MCF 10A (cell line): ENCODE measurements at regions of chr6 and their contacts with region 1.

Region 1: GRCh38 chr6:168370310-168370991 is 50.9 kb upstream of the DACT2 start:
- DNase-seq: peak; percentile 59
- H3K4me3 Mint-ChIP-seq: no peak overlapping the region
- H3K27ac Mint-ChIP-seq: no peak overlapping the region
- H3K4me1 Mint-ChIP-seq: peaks cover 6% of the 10 kb centered on the region
- H3K27me3 Mint-ChIP-seq: peaks cover 10% of the 10 kb centered on the region
- CTCF ChIP-seq: peak; percentile 83

Region 2: DNA sequence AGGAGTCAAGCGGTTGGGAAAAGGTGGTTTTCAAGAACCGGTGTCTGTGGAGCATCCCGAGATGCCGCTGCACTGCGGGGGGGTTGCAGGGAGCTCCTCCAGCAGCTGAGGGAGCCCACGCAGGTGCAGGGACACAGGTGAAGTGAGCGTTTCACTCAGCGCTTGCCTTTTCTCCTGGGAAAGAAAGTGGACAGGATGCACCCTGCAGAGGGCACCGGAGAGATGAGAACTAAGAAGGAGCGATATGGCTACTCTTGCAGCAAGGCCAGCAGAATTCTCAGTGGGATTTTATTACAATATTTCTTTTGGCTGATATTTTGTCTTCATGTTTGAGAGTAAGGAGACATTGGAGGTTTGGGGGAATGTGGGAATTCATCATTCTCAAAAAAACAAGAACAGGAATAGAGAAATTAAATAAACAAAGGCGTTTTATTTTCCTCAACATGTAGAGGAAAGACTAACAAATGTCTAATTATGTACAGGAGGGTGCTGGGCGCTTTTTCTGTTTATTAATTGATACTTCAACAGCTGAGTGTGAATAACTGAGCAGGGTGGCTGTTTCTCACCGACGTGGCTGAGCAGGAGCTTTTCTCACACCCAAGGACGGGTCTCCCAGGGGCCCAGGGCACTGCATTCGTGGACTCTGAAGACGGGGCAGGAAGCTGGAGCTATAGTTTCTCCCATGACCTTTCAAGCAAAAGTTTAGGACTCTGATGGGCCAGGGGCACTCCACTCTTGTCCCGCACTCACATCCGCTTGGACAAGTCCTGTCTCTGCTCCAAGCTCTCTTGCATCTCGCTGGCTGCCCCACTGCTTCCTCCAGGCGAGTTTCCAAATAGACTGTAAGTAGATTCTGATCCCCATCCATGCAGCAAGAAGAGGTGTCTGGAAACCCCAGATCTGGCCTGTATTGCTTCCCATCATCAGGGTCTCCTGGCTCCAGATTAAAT is 246.6 kb after region 1 on chr6:
- CTCF ChIA-PET with region 1: interaction called, 3 read pairs
- POLR2A ChIA-PET with region 1: no interaction called
- intact Hi-C with region 1: loop called (anchors 2 kb)
- DNase-seq: peak; percentile 27
- H3K4me3 Mint-ChIP-seq: no peak overlapping the region
- H3K27ac Mint-ChIP-seq: no peak overlapping the region
- H3K4me1 Mint-ChIP-seq: no peaks in the 10 kb centered on the region
- H3K27me3 Mint-ChIP-seq: no peaks in the 10 kb centered on the region
- CTCF ChIP-seq: peak; percentile 44

Region 3: DNA sequence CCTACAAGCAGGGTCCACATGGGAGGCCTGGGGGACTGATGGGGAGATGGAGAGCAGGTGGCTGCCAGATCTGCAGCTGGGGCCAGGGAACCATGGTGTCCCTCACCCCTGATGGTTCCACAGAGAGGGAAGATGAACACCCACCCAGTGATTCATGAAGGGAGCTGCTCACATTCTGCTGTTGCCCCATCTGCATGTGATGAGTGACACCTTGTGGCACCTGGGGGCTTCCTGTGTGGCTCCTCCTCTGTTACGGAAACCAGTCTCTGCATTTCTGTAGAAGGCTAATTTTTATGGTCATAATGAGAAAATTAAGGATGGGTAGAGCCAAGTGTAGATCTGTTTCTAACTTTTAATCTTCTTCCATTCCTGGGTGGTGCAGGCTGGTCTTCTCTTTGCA is 287.6 kb after region 1 on chr6:
- CTCF ChIA-PET with region 1: no interaction called
- POLR2A ChIA-PET with region 1: no interaction called
- intact Hi-C with region 1: loop called (anchors 2 kb)
- DNase-seq: no peak
- H3K4me3 Mint-ChIP-seq: no peak overlapping the region
- H3K27ac Mint-ChIP-seq: no peak overlapping the region
- H3K4me1 Mint-ChIP-seq: peaks cover 7% of the 10 kb centered on the region
- H3K27me3 Mint-ChIP-seq: peaks cover 46% of the 10 kb centered on the region
- CTCF ChIP-seq: peak; percentile 22

Region 4: DNA sequence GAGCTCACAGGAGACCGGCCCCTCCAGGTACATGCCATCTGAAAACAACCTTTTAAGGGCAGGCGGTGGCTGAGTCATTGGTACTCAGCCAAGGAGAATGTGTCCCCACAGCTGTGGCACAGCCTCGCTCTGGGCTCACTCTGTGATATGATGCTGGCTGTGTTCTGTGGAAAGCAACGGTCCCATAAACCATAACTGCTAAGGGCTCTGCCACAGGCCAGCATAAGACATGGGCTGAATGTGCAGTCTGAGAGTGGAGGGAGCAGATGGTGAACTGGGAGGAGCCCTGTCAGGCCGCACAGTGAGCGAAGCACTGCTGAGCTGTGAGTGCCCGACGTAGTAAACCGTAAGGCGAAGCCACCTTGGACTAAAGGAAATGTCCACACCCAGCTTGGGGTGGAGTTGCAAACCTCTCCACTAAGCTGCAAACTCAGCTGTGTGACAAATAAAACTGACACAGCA is 507.4 kb after region 1 on chr6:
- CTCF ChIA-PET with region 1: interaction called, 21 read pairs
- POLR2A ChIA-PET with region 1: no interaction called
- intact Hi-C with region 1: no loop called
- DNase-seq: peak; percentile 29
- H3K4me3 Mint-ChIP-seq: no peak overlapping the region
- H3K27ac Mint-ChIP-seq: no peak overlapping the region
- H3K4me1 Mint-ChIP-seq: no peaks in the 10 kb centered on the region
- H3K27me3 Mint-ChIP-seq: peaks cover 90% of the 10 kb centered on the region
- CTCF ChIP-seq: no peak

Region 5: DNA sequence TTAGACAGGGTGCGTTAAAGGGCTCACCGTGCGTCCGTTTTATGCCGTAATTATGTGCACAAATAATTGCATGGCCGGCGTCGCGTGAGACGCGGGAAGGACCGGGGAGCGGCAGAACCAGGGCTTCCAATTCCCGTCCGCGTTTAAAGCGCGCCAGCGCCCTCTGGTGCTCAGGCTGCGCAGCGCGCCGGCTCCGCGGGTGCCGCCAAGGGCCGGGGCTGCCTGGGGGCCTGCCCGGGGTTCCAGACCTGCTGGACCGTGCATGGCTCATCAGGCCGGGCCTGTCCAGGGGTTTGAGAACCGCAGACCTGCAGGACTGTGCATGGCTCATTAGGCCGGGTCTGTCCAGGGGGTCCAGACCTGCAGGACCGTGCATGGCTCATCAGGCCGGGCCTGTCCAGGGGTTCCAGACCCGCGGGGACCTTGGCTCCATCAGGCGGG is 514.2 kb after region 1 on chr6:
- CTCF ChIA-PET with region 1: interaction called, 68 read pairs
- POLR2A ChIA-PET with region 1: no interaction called
- intact Hi-C with region 1: loop called (anchors 1 kb)
- DNase-seq: peak; percentile 46
- H3K4me3 Mint-ChIP-seq: no peak overlapping the region
- H3K27ac Mint-ChIP-seq: no peak overlapping the region
- H3K4me1 Mint-ChIP-seq: no peaks in the 10 kb centered on the region
- H3K27me3 Mint-ChIP-seq: peaks cover 74% of the 10 kb centered on the region
- CTCF ChIP-seq: peak; percentile 97

Region 6: DNA sequence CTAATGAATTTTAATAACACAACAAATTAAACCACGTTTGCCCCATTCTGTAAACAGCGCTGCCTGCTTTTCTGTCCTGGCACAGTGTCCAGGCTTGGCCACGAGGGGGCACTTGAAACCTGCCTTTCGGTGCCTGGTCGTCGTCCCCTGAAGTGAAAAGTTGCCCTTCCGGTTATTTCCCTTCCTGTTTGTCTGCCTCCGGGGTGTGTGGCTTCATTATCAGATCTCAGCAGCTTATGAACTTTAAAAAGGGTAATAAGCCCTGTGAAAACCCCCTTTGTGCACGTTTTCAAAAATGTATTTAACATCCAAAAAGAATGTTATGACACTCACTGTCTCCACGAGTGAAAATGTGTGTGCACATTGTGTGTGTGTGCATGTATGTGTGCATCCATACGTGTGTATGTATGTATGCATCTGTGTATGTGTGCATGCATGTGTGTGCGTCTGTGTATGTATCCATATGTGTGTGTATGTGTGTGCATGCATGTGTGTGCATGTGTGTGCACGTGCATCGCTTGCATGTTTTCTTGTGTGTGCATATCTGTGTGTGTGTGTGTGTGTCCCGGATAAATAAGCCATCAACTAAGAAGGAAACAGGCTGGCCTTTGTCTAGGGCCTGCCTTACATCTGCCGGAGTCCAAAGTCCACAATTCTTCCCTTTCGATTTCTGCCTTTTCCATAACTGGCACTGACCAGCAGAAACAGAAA is 524.8 kb after region 1 on chr6:
- CTCF ChIA-PET with region 1: interaction called, 68 read pairs
- POLR2A ChIA-PET with region 1: no interaction called
- intact Hi-C with region 1: no loop called
- DNase-seq: peak; percentile 75
- H3K4me3 Mint-ChIP-seq: peak overlapping the region; percentile 35
- H3K27ac Mint-ChIP-seq: no peak overlapping the region
- H3K4me1 Mint-ChIP-seq: no peaks in the 10 kb centered on the region
- H3K27me3 Mint-ChIP-seq: peaks cover 35% of the 10 kb centered on the region
- CTCF ChIP-seq: peak; percentile 93